ENCODE measurements at regions of chr10 and their contacts with region 1.

Region 1: DNA sequence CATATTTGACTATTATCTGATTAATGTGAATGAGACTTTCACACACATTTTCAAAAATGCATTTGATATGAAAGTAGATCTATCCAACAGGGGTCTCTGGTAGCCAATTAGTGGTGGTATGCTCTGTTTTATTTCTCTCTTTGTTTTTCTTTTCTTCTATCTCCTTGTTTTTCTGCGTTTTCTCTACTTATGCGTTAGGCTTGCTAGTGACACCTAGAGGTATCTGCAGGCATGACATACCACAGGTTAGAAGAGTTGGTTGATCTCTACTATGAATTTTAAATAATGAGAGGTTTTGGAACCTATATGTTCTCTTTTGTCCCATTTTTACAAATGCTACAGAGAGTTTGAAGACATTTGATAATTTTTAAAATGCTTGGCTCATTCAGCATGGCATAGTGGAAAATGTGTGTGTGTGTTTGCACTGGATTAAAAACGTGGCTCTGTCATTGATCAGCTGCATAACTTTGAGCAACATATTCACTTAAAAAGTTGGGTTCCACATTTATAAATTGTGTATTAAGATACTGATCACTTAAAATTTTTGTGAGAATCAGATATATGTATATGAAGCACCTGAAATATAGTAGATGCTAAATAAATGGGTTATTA is 28.1 kb upstream of the PLXDC2 start:
- DNase-seq: peak in 1 of 2 experiments; percentile 61
- H3K4me3 ChIP-seq: no peak overlapping the region
- H3K4me3 Mint-ChIP-seq: no peak overlapping the region
- H3K27ac Mint-ChIP-seq: no peak overlapping the region
- H3K4me1 ChIP-seq: 0 out of 2 replicates have a peak, but pooled peaks cover 3% of the 10 kb centered on the region
- H3K4me1 Mint-ChIP-seq: no peaks in the 10 kb centered on the region
- H3K27me3 ChIP-seq: no peaks in the 10 kb centered on the region
- H3K27me3 Mint-ChIP-seq: no peaks in the 10 kb centered on the region
- CTCF ChIP-seq: peak; percentile 85 to 97

Region 2: GRCh38 chr10:18793951-18794350 is 994.2 kb before region 1 on chr10:
- CTCF ChIA-PET with region 1: no interaction called
- POLR2A ChIA-PET with region 1: no interaction called
- intact Hi-C with region 1: loop called (anchors 10 kb)
- DNase-seq: peak in 1 of 2 experiments; percentile 33
- H3K4me3 ChIP-seq: no peak overlapping the region
- H3K4me3 Mint-ChIP-seq: no peak overlapping the region
- H3K27ac Mint-ChIP-seq: no peak overlapping the region
- H3K4me1 ChIP-seq: no peaks in the 10 kb centered on the region
- H3K4me1 Mint-ChIP-seq: no peaks in the 10 kb centered on the region
- H3K27me3 ChIP-seq: no peaks in the 10 kb centered on the region
- H3K27me3 Mint-ChIP-seq: peaks cover 4% of the 10 kb centered on the region
- CTCF ChIP-seq: peak; percentile 62 to 71

Region 3: DNA sequence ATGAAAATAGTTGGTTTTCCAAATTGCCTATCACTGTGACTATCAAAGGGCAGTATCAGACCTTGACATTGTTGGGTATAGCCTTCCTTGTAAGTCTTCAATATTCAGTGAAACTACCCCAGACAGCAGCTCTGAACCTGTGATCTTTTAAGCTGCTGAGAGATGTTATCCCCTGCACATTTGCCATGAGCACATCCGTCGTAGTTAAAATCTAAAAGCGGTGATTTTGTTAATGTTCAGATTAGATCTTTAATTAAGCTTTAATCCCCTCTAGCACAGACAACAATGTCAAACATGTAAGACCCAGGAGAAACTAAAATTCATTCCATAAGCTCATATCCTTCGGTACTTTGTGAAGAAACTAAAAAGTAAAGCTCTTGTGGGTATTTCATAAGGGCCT is 633.8 kb before region 1 on chr10:
- CTCF ChIA-PET with region 1: no interaction called
- POLR2A ChIA-PET with region 1: no interaction called
- intact Hi-C with region 1: no loop called
- DNase-seq: no peak
- H3K4me3 ChIP-seq: no peak overlapping the region
- H3K4me3 Mint-ChIP-seq: no peak overlapping the region
- H3K27ac Mint-ChIP-seq: no peak overlapping the region
- H3K4me1 ChIP-seq: no peaks in the 10 kb centered on the region
- H3K4me1 Mint-ChIP-seq: no peaks in the 10 kb centered on the region
- H3K27me3 ChIP-seq: no peaks in the 10 kb centered on the region
- H3K27me3 Mint-ChIP-seq: no peaks in the 10 kb centered on the region
- CTCF ChIP-seq: no peak

Region 4: GRCh38 chr10:19347621-19348020 is 440.6 kb before region 1 on chr10:
- CTCF ChIA-PET with region 1: no interaction called
- POLR2A ChIA-PET with region 1: no interaction called
- intact Hi-C with region 1: loop called (anchors 1 kb)
- DNase-seq: peak in 1 of 2 experiments; percentile 37
- H3K4me3 ChIP-seq: no peak overlapping the region
- H3K4me3 Mint-ChIP-seq: no peak overlapping the region
- H3K27ac Mint-ChIP-seq: no peak overlapping the region
- H3K4me1 ChIP-seq: no peaks in the 10 kb centered on the region
- H3K4me1 Mint-ChIP-seq: no peaks in the 10 kb centered on the region
- H3K27me3 ChIP-seq: no peaks in the 10 kb centered on the region
- H3K27me3 Mint-ChIP-seq: no peaks in the 10 kb centered on the region
- CTCF ChIP-seq: peak; percentile 36 to 62

Region 5: DNA sequence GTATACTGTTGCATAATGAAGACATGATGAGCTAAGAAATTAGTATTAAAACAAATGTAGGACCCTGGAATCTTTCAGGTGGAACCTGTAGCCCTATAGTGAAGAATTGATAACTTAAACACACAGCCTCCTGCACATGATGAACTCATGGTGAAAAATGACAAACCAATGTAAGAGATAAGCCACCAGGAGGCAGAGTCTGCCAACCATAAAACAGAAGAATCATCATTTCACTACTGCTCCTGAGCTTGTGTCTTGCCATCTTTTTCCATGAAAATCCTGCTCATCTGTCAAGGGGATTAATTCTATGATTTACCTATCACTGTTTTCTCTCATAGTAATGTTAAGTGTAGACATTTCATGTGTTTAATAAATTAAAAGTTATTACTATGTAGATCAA is 375.6 kb before region 1 on chr10:
- CTCF ChIA-PET with region 1: no interaction called
- POLR2A ChIA-PET with region 1: no interaction called
- intact Hi-C with region 1: loop called (anchors 2 kb)
- DNase-seq: peak in 1 of 2 experiments; percentile 30
- H3K4me3 ChIP-seq: no peak overlapping the region
- H3K4me3 Mint-ChIP-seq: no peak overlapping the region
- H3K27ac Mint-ChIP-seq: no peak overlapping the region
- H3K4me1 ChIP-seq: no peaks in the 10 kb centered on the region
- H3K4me1 Mint-ChIP-seq: no peaks in the 10 kb centered on the region
- H3K27me3 ChIP-seq: no peaks in the 10 kb centered on the region
- H3K27me3 Mint-ChIP-seq: no peaks in the 10 kb centered on the region
- CTCF ChIP-seq: peak; percentile 28 to 53

Region 6: DNA sequence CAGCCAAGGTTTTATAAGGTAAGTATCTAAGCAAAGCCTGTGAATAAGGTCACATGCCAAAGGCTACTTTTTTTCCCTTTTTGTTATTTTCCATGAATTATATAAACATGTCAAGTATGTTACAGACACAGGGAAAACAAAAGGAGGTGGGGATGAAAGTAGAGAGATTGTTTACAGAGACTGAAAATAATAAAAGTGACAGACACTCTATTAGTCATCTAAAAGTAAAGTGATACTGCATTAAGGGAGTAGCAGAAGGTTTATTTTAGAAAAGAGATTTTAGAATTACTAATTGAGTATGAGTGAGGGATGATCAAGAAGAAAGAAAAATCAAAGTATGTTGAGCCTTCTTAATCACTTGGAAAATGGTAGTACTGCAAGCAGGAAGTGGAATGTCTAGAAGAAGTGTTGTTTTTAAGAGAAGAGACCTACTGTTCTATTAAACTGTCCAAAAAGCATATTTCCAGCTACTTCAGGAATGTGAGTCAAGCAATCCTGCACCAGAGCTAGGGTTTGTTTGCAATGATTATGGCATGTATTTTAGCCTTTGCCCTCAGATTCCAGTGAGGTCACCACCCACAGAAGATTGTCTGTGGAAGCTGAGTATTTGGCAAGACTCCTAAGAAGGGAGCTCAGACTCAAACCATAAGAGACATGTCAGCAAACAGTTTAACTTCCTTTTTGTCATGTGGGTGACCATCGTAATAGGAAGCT is 149.8 kb before region 1 on chr10:
- CTCF ChIA-PET with region 1: no interaction called
- POLR2A ChIA-PET with region 1: no interaction called
- intact Hi-C with region 1: loop called (anchors 2 kb)
- DNase-seq: peak; percentile 62 to 65
- H3K4me3 ChIP-seq: no peak overlapping the region
- H3K4me3 Mint-ChIP-seq: peak overlapping the region; percentile 2
- H3K27ac Mint-ChIP-seq: peak overlapping the region; percentile 62
- H3K4me1 ChIP-seq: peaks cover 4% of the 10 kb centered on the region; the same call in 1 of the 2 replicates
- H3K4me1 Mint-ChIP-seq: peaks cover 14% of the 10 kb centered on the region
- H3K27me3 ChIP-seq: no peaks in the 10 kb centered on the region
- H3K27me3 Mint-ChIP-seq: no peaks in the 10 kb centered on the region
- CTCF ChIP-seq: no peak

Region 7: GRCh38 chr10:19654576-19654975 is 133.6 kb before region 1 on chr10:
- CTCF ChIA-PET with region 1: no interaction called
- POLR2A ChIA-PET with region 1: no interaction called
- intact Hi-C with region 1: no loop called
- DNase-seq: no peak
- H3K4me3 ChIP-seq: no peak overlapping the region
- H3K4me3 Mint-ChIP-seq: no peak overlapping the region
- H3K27ac Mint-ChIP-seq: no peak overlapping the region
- H3K4me1 ChIP-seq: no peaks in the 10 kb centered on the region
- H3K4me1 Mint-ChIP-seq: no peaks in the 10 kb centered on the region
- H3K27me3 ChIP-seq: no peaks in the 10 kb centered on the region
- H3K27me3 Mint-ChIP-seq: no peaks in the 10 kb centered on the region
- CTCF ChIP-seq: no peak

Region 8: DNA sequence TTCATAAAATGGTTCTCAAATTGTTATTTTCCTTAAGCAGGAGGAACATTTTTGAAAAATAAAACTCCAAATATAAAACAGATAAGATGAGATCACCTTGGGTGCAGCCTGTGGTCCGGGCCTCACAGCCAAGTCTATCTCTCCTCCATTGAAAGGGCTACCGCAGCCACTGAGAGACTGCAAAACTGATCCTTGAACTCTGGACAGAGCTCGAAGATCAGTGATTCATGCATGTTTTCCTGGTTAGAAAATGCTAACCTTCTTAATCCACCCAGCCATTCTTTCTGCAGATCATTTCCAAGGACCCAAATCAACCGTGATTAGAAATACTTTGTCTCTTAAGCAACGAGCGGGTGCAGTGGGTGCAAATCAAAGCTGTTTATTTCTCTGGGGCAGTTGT is 406.9 kb after region 1 on chr10:
- CTCF ChIA-PET with region 1: no interaction called
- POLR2A ChIA-PET with region 1: no interaction called
- intact Hi-C with region 1: no loop called
- DNase-seq: no peak
- H3K4me3 ChIP-seq: no peak overlapping the region
- H3K4me3 Mint-ChIP-seq: no peak overlapping the region
- H3K27ac Mint-ChIP-seq: no peak overlapping the region
- H3K4me1 ChIP-seq: no peaks in the 10 kb centered on the region
- H3K4me1 Mint-ChIP-seq: no peaks in the 10 kb centered on the region
- H3K27me3 ChIP-seq: no peaks in the 10 kb centered on the region
- H3K27me3 Mint-ChIP-seq: peaks cover 6% of the 10 kb centered on the region
- CTCF ChIP-seq: no peak

Measured in Caco-2 (cell line).